Sigmoid colon (tissue), 7 donors: ENCODE measurements at regions of chr22 and their contacts with region 1.

Region 1: DNA sequence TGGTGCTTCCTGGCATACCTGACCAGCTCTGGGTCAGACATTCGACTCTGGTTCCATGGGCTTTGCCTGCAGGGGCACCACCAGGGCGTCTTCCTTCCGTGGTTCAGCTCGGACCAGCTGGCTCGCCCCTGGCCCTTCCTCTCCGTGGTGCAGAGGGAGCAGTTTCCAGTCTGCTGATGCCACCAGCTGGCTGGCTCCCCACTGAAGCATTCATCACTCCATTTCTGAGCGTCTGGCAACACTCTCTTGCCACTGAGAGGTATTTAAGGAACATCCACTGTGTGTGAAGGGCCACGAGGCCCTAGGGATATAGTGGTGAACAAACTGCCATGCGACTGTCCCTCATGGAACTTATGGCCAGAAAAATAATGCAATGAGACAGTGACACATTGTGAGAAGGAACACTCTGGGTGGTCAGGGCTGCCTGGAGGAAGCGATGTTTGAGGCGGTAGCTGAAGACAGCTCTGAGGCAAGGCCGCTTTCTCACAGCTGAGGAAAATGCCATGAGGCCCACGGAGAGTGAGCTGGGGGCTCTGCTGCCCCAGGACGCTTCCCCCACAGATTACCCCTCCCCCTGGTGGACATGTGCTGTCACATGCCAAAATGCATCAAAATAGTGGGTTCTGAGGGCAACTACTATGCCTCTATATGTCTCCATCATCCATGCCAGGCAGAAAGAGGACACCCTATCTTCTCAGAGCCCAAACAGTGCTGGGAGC is 44.9 kb upstream of the ARFGAP3 start:
- DNase-seq: no peak
- H3K4me3 ChIP-seq: no peak overlapping the region
- H3K27ac ChIP-seq: peak overlapping the region; percentile 59 to 75 (median 69)
- H3K4me1 ChIP-seq: peaks cover 0 to 57% (median 44%) of the 10 kb centered on the region in 4 donors
- H3K27me3 ChIP-seq: no peaks in the 10 kb centered on the region
- CTCF ChIP-seq: no peak
- EP300 ChIP-seq: no peak
- POLR2A ChIP-seq: no peak

Region 2: DNA sequence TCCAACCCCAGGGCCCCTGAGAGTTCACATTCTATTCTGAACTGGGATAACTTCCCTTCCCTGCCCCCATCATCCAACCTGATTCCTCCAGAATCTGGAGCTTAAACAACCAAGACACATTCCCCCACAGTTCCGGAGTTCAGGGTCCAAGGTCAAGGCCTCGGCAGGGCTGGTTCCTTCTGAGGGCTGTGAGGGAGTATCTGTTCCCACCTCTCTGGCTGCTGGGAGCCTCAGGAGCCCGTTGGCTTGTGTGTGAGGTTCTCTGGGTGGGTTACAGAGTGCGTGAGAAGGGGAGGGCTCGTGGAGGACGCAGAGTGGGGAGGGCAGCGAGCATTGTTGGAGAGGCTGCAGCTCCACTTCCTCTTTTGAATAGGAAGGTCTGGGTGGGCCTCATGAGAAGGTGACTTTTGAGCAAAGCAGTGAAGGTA is 339.7 kb before region 1 on chr22:
- intact Hi-C with region 1: no loop called
- DNase-seq: no peak
- H3K4me3 ChIP-seq: no peak overlapping the region
- H3K27ac ChIP-seq: no peak overlapping the region
- H3K4me1 ChIP-seq: no peaks in the 10 kb centered on the region
- H3K27me3 ChIP-seq: no peaks in the 10 kb centered on the region
- CTCF ChIP-seq: no peak
- EP300 ChIP-seq: no peak
- POLR2A ChIP-seq: no peak

Region 3: GRCh38 chr22:42967933-42968332 is 66.0 kb after region 1 on chr22:
- intact Hi-C with region 1: loop called (anchors 5 kb)
- DNase-seq: peak; percentile 82
- H3K4me3 ChIP-seq: no peak overlapping the region
- H3K27ac ChIP-seq: peak overlapping the region in 3 of 4 donors; percentile 73 to 76 (median 75)
- H3K4me1 ChIP-seq: peaks cover 0 to 59% (median 41%) of the 10 kb centered on the region in 4 donors
- H3K27me3 ChIP-seq: no peaks in the 10 kb centered on the region
- CTCF ChIP-seq: no peak
- EP300 ChIP-seq: no peak
- POLR2A ChIP-seq: no peak

Region 4: GRCh38 chr22:42994881-42995562 is 93.1 kb after region 1 on chr22:
- intact Hi-C with region 1: loop called (anchors 5 kb)
- DNase-seq: peak; percentile 88
- H3K4me3 ChIP-seq: peak overlapping the region; percentile 15 to 47 (median 42)
- H3K27ac ChIP-seq: peak overlapping the region; percentile 89 to 93 (median 90)
- H3K4me1 ChIP-seq: peaks cover 0 to 91% (median 78%) of the 10 kb centered on the region in 4 donors
- H3K27me3 ChIP-seq: no peaks in the 10 kb centered on the region
- CTCF ChIP-seq: no peak
- EP300 ChIP-seq: peak in 2 of 4 donors; percentile 13 to 25
- POLR2A ChIP-seq: peak; percentile 64 to 69

Region 5: DNA sequence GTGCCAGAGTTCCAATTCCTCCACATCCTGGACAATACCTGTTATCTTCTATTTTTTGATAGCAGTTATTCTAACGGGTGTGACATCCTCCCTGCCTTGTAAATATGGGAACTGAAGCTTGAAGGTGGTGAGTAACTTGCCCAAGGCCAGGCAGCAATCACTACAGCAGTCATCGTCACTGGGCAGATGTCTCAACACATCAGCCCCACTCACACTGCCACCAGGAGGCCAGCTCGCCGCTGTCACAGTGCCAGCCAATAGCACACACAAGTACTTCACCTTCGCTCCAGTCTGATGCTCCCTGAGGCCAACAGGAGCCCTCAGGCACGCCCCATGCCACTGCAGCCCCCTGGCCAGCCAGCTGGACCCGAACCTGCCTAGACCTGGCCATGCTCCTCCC is 192.1 kb after region 1 on chr22:
- intact Hi-C with region 1: no loop called
- DNase-seq: no peak
- H3K4me3 ChIP-seq: no peak overlapping the region
- H3K27ac ChIP-seq: no peak overlapping the region
- H3K4me1 ChIP-seq: peaks cover 0 to 7% (median 5%) of the 10 kb centered on the region in 4 donors
- H3K27me3 ChIP-seq: no peaks in the 10 kb centered on the region
- CTCF ChIP-seq: no peak
- EP300 ChIP-seq: no peak
- POLR2A ChIP-seq: no peak